ENCODE measurements at regions of chr17 and their contacts with region 1.

Region 1: DNA sequence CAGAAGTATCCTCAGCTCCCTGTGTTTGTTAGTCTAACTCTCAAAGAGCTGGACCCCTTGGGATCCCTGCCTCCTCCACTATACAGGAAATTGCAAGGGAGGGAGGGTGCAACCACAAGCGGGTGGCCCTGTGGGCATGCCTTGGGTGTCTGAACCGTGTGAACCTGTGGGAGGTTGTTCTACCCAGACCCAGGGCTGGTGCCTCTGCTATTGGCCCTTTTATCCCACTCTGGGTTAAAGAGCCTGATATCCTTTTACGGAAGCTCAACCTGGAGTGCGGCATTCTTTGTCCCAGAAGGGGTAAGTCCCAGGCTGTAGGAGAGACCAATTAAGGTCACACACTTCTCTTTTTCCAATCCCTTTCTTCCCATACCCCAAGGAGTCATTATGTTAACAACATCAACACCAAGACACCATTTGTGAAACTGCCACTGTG is 53.4 kb downstream of the ARSG start:
- DNase-seq: no peak
- H3K4me3 ChIP-seq: peak overlapping the region in 1 of 7 experiments; percentile 14
- H3K27ac ChIP-seq: no peak overlapping the region
- H3K4me1 ChIP-seq: peaks cover 24 to 50% (median 29%) of the 10 kb centered on the region in 4 experiments
- H3K27me3 ChIP-seq: peaks cover 0 to 8% (median 0%) of the 10 kb centered on the region in 5 experiments

Region 2: GRCh38 chr17:68143425-68143824 is 201.3 kb before region 1 on chr17:
- CTCF ChIA-PET with region 1: no interaction called
- POLR2A ChIA-PET with region 1: no interaction called
- DNase-seq: no peak
- H3K4me3 ChIP-seq: no peak overlapping the region
- H3K27ac ChIP-seq: no peak overlapping the region
- H3K4me1 ChIP-seq: no peaks in the 10 kb centered on the region
- H3K27me3 ChIP-seq: no peaks in the 10 kb centered on the region

Region 3: DNA sequence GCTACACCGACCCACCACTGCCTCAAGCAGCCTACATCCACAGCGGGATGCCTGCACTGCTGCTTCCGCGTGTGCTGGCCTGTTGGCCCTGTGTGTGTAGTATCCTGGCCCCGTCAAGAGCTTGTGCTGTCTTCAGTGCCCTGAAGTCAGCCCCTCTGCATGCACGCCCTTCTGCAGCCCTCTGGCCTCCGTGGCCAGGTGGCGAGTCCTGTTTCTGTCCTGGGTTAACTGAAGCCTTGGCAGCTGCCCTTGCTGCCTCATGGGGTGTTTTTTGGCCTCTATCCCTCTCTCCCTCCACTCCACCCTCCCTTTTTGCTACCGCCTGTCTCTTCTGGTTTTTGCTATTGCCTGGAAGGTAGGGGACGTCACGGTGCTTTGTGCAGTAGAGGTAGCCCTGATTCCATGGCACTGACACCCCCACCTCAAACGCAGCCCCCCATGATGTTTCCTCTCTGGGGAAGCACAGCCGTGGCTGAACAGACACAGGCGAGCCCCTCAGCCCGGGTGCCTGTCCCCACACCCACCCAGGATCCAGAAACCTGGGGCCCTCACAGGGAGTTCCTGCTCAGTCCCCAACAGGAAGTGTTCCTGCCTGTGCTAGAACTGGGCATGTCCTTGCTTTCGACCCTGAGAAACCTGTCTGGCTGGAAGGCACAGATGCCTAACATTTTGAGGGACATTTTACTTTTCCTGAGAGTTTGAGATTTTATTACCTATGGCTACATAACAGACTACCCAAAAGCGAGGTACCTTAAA is 115.7 kb before region 1 on chr17:
- CTCF ChIA-PET with region 1: no interaction called
- POLR2A ChIA-PET with region 1: no interaction called
- DNase-seq: no peak
- H3K4me3 ChIP-seq: no peak overlapping the region
- H3K27ac ChIP-seq: no peak overlapping the region
- H3K4me1 ChIP-seq: peaks cover 0 to 7% (median 4%) of the 10 kb centered on the region in 4 experiments
- H3K27me3 ChIP-seq: no peaks in the 10 kb centered on the region

Region 4: DNA sequence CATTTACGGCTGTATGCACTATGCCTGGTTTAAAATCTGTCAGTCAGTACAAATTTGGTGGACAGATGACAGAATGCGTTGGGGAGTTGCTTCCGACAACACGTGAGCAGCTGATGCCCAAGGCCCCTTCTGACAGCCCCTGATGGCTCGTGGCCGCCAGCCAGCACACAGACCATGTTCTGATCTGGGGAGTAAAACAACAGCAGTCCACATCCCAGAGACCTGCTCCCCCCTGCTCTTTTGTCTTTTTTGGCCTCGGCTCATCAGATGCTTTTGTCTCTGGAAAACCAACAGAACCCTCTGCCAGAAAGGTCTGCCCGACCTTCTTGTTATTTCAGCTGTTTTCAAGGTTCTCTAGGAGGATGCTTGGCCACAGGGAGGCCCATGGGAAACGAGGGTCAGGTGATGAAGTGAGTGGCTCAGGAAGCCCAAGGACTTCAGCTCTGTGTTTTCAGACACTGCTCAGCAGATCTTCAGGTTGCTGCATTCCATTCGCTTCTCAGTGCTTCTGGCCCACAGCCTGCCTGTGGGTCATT is 42.6 kb before region 1 on chr17:
- CTCF ChIA-PET with region 1: no interaction called
- POLR2A ChIA-PET with region 1: no interaction called
- DNase-seq: no peak
- H3K4me3 ChIP-seq: no peak overlapping the region
- H3K27ac ChIP-seq: no peak overlapping the region
- H3K4me1 ChIP-seq: peaks cover 0 to 3% (median 0%) of the 10 kb centered on the region in 4 experiments
- H3K27me3 ChIP-seq: peaks cover 0 to 7% (median 4%) of the 10 kb centered on the region in 5 experiments

Region 5: GRCh38 chr17:68327823-68328570 is 16.7 kb before region 1 on chr17:
- CTCF ChIA-PET with region 1: interaction called, 15 read pairs
- POLR2A ChIA-PET with region 1: no interaction called
- DNase-seq: no peak
- H3K4me3 ChIP-seq: no peak overlapping the region
- H3K27ac ChIP-seq: no peak overlapping the region
- H3K4me1 ChIP-seq: peaks cover 0 to 2% (median 0%) of the 10 kb centered on the region in 4 experiments
- H3K27me3 ChIP-seq: peaks cover 0 to 3% (median 0%) of the 10 kb centered on the region in 5 experiments

Region 6: DNA sequence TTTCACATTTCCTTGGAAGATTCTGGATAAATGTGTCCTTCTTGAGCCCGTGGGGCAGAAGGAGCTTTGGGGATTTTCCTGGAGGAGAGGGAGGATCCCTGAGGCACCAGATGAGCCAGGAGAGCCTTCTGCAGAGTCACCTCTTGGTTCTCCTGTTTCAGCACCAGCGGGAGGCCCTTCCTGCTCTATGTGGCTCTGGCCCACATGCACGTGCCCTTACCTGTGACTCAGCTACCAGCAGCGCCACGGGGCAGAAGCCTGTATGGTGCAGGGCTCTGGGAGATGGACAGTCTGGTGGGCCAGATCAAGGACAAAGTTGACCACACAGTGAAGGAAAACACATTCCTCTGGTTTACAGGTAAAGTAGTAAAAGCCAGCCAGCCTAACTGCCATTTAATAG is 23.7 kb after region 1 on chr17:
- CTCF ChIA-PET with region 1: no interaction called
- POLR2A ChIA-PET with region 1: no interaction called
- DNase-seq: no peak
- H3K4me3 ChIP-seq: no peak overlapping the region
- H3K27ac ChIP-seq: no peak overlapping the region
- H3K4me1 ChIP-seq: no peaks in the 10 kb centered on the region
- H3K27me3 ChIP-seq: peaks cover 0 to 4% (median 3%) of the 10 kb centered on the region in 5 experiments

Measured in common myeloid progenitor, CD34-positive (primary cell).